ENCODE measurements at regions of chr4 and their contacts with region 1.

Region 1: GRCh38 chr4:52545099-52546069 is 113.7 kb downstream of the USP46 start:
- DNase-seq: peak; percentile 86
- H3K4me3 ChIP-seq: no peak overlapping the region
- H3K27ac ChIP-seq: no peak overlapping the region
- H3K4me1 ChIP-seq: no peaks in the 10 kb centered on the region
- H3K27me3 ChIP-seq: no peaks in the 10 kb centered on the region
- CTCF ChIP-seq: peak; percentile 65 to 92 (median 80)
- EP300 ChIP-seq: no peak
- POLR2A ChIP-seq: no peak

Region 2: DNA sequence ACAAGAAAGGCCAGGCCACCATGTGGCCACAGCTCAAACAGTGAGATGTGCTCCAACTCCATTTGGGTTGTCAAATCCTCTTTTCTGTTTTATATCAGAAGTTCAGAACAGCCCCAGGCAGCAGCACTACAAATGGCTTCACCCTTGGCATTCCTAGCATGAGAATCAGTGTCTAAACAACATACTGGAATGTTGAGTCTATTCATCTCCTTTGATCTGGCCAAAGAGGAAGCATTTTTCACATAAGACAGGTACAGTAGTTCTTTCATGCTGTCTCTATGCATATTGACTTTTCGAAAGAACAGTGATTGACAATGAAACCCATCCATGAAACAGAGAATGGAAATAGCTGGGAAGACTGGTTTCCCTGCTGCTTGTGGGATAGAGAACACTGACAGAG is 175.7 kb before region 1 on chr4:
- intact Hi-C with region 1: loop called (anchors 5 kb)
- DNase-seq: no peak
- H3K4me3 ChIP-seq: no peak overlapping the region
- H3K27ac ChIP-seq: no peak overlapping the region
- H3K4me1 ChIP-seq: peaks cover 0 to 12% (median 11%) of the 10 kb centered on the region in 4 donors
- H3K27me3 ChIP-seq: no peaks in the 10 kb centered on the region
- CTCF ChIP-seq: no peak
- EP300 ChIP-seq: no peak
- POLR2A ChIP-seq: no peak

Region 3: DNA sequence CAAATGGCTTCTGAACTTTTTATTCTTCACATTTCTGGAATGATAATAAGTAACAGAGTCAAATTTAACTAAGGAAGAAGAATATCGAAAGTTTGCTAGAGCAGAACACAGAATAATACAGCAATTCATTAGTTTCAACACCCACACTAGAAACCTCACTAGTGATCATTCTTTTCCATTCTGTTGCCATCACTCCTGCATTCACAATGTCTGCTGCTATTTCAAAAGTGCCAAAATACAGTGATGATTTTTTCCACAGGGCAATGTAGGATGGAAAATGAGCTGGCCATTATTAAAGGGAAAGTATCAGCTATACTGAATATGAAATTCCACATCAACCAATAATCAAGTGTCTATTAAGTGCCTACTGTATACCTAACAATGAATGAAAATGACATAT is 72.9 kb before region 1 on chr4:
- intact Hi-C with region 1: no loop called
- DNase-seq: no peak
- H3K4me3 ChIP-seq: no peak overlapping the region
- H3K27ac ChIP-seq: no peak overlapping the region
- H3K4me1 ChIP-seq: peaks cover 0 to 6% (median 0%) of the 10 kb centered on the region in 4 donors
- H3K27me3 ChIP-seq: no peaks in the 10 kb centered on the region
- CTCF ChIP-seq: no peak
- EP300 ChIP-seq: no peak
- POLR2A ChIP-seq: no peak

Region 4: DNA sequence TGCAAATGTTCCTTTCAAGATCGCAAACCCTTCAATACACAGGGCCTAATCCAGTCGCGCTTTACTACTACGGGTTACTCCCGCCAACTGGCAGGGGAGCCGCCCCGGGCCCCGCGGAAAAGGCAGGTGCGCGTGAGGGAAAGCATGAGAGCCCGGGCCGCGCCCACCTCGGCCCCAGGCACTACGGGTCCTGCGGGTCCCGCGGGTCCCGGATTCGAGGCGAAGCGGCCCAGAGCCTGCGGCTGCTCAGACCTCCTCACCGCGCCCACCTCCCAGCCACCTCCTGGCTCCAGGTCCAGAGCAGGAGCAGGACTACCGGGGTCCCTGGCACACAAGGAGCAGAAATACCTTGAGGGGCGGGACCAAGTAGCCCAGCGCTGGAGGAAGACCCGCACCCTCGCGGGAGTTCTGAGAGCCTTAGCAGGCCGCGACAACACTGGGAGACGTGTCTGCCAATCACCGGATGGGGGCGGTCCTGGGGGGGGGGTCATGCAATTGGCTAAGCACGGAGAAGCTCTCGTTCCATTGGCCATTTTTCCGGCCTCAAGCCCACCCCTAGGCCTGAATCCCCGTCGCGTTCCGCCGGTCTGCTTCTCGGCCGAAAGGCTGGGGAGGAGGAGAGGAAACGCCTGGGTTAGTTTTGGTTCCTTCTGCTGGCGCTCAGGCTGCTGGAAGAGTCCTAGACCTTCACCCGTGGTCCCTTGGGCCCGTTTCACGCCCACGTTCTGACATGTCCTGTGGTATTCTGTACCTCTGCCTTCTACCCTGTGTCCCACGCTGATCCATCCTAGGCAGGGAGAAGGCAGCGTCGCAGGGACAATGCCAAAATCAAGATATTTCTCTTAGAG is 176.8 kb after region 1 on chr4:
- intact Hi-C with region 1: loop called (anchors 5 kb)
- DNase-seq: peak; percentile 97
- H3K4me3 ChIP-seq: peak overlapping the region; percentile 79 to 88 (median 82)
- H3K27ac ChIP-seq: peak overlapping the region; percentile 88 to 92 (median 90)
- H3K4me1 ChIP-seq: peaks cover 0 to 14% (median 3%) of the 10 kb centered on the region in 4 donors
- H3K27me3 ChIP-seq: no peaks in the 10 kb centered on the region
- CTCF ChIP-seq: no peak
- EP300 ChIP-seq: no peak
- POLR2A ChIP-seq: peak; percentile 64 to 76

Region 5: GRCh38 chr4:52861879-52862616 is 316.7 kb after region 1 on chr4 and contains the start of gene RASL11B:
- intact Hi-C with region 1: loop called (anchors 10 kb)
- DNase-seq: peak; percentile 87
- H3K4me3 ChIP-seq: peak within 1 kb of the TSS; percentile 44 to 75 (median 65)
- H3K27ac ChIP-seq: peak within 1 kb of the TSS; percentile 45 to 69 (median 58)
- H3K4me1 ChIP-seq: peaks cover 0 to 27% (median 22%) of the 10 kb centered on the region in 4 donors
- H3K27me3 ChIP-seq: peaks cover 0 to 11% (median 6%) of the 10 kb centered on the region in 3 donors
- CTCF ChIP-seq: peak in 2 of 4 experiments; percentile 20 to 25
- EP300 ChIP-seq: no peak
- POLR2A ChIP-seq: no peak
- total RNA-seq, gene RASL11B: 0.36 to 2.2 (median 0.60) TPM